MCF 10A (cell line): ENCODE measurements at regions of chr16 and their contacts with region 1.

Region 1: DNA sequence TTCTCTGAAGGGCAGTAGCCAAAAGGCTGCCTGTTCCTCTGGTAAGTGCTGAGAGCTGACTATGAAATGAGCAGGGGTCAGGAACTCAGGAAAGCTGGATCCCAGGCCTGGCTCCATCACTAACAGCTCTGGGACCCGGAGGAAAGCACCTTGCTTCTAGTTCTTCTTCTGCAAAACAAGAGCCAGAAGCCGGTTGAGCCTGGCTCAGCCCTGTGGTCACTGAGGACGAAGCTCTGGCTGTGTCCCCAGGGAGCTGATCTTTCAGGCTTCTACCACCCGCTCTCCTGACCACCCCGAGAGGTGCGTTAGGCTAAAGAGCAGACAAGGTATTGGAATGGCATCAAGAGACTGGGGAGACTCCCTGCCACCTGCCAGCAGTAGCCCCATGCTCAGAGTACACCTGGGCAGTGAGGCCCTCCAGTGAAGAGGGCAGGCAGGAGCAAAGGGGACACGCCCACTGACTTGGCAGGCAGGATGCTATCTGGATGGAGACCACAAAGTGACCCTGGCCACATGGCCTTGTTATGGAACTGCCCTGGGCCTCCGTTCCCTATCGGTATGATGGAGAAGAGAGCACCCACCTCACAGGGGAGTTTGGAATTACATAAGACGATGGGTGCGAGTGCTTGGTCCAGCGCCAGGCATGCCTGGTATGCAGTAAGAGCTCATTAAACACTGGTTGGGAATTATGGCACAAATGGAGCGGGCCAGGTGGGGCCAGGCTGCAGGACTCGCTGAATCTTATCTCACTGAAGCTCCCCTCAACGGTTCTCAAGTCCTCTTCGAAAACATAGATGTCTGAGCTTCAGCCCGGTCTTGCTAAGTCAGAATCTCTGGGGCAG is 61.4 kb downstream of the COG7 start:
- DNase-seq: peak; percentile 29
- H3K4me3 Mint-ChIP-seq: no peak overlapping the region
- H3K27ac Mint-ChIP-seq: peak overlapping the region; percentile 92
- H3K4me1 Mint-ChIP-seq: peaks cover 36% of the 10 kb centered on the region
- H3K27me3 Mint-ChIP-seq: no peaks in the 10 kb centered on the region
- CTCF ChIP-seq: no peak

Region 2: GRCh38 chr16:23241005-23241404 is 150.6 kb before region 1 on chr16:
- CTCF ChIA-PET with region 1: no interaction called
- POLR2A ChIA-PET with region 1: no interaction called
- intact Hi-C with region 1: no loop called
- DNase-seq: no peak
- H3K4me3 Mint-ChIP-seq: no peak overlapping the region
- H3K27ac Mint-ChIP-seq: no peak overlapping the region
- H3K4me1 Mint-ChIP-seq: peaks cover under 1% of the 10 kb centered on the region
- H3K27me3 Mint-ChIP-seq: no peaks in the 10 kb centered on the region
- CTCF ChIP-seq: no peak

Region 3: GRCh38 chr16:23362460-23363317 is 28.9 kb before region 1 on chr16:
- CTCF ChIA-PET with region 1: interaction called, 3 read pairs
- POLR2A ChIA-PET with region 1: interaction called, 33 read pairs
- intact Hi-C with region 1: no loop called
- DNase-seq: peak; percentile 95
- H3K4me3 Mint-ChIP-seq: no peak overlapping the region
- H3K27ac Mint-ChIP-seq: peak overlapping the region; percentile 68
- H3K4me1 Mint-ChIP-seq: peaks cover 41% of the 10 kb centered on the region
- H3K27me3 Mint-ChIP-seq: no peaks in the 10 kb centered on the region
- CTCF ChIP-seq: no peak

Region 4: GRCh38 chr16:23371368-23371767 is 20.2 kb before region 1 on chr16:
- CTCF ChIA-PET with region 1: interaction called, 4 read pairs
- POLR2A ChIA-PET with region 1: interaction called, 10 read pairs
- intact Hi-C with region 1: no loop called
- DNase-seq: no peak
- H3K4me3 Mint-ChIP-seq: no peak overlapping the region
- H3K27ac Mint-ChIP-seq: no peak overlapping the region
- H3K4me1 Mint-ChIP-seq: peaks cover 9% of the 10 kb centered on the region
- H3K27me3 Mint-ChIP-seq: no peaks in the 10 kb centered on the region
- CTCF ChIP-seq: no peak